T-cell (primary cell): ENCODE measurements at regions of chr6 and their contacts with region 1.

Region 1: DNA sequence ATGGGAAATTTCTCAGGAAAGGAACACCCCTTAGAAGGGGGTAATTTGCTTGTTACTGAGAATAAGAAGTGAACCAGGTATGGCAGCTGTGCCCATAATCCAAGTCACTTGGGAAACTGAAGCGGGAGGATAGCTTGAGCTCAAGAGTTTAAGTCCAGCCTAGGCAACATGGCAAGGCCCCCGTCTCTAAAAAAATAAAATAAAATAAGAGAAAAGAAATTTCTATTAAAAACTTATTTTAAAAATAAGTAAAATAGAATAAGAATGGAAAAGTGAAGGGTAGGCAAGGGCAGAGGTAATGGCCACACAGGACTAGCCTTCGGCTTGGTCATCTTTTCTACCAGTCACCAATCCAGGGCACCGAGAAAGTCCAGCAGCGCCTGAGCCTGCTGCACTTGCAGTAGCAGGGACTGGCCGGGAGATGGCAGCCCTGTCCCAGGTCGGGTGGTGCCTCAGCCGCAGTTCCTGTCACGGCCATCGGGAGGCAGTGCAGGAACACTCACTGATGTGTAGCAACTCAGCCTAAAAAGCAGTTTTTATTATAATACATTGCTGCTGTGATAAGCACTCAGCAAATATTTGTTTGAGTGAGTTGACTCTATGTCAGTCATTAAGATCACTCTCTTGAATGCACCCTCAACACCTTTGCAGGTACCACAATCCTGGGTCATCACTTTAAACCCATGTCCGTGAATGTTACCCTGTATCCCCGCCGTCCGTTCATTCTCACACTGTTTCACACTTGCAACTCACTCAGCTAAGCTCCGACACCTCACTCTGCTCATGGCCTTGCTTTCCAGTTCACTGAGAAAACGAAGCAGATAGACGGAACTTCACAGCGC is 23.2 kb upstream of the GCM1 start:
- DNase-seq: peak; percentile 69 to 94 (median 88)
- ATAC-seq: peak; percentile 88 to 99 (median 96)
- H3K4me3 ChIP-seq: no peak overlapping the region
- H3K4me3 Mint-ChIP-seq: no peak overlapping the region
- H3K27ac ChIP-seq: no peak overlapping the region
- H3K27ac Mint-ChIP-seq: no peak overlapping the region
- H3K4me1 ChIP-seq: no peaks in the 10 kb centered on the region
- H3K4me1 Mint-ChIP-seq: peaks cover 0 to 9% (median 0%) of the 10 kb centered on the region in 3 donors
- H3K27me3 ChIP-seq: no peaks in the 10 kb centered on the region
- H3K27me3 Mint-ChIP-seq: no peaks in the 10 kb centered on the region

Region 2: DNA sequence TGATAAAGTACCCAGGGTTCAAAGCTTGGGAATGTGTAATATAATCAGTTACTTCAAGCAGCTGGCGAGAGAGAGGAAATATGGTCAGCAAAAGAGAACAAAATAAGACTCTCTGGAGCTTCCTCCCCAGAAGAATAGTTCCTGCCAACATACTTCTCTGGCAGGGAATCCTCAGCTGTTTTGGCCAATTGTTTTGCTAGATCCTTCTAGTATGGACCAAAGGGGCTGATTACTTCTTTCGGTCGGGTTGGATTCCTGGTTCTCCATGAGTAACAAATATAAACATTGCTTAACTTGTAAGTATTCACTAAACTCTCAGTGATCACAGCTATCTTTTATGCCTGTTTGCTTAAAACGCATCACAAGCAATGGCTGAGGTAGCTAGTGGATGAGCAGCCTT is 138.1 kb before region 1 on chr6:
- CTCF ChIA-PET with region 1: no interaction called
- POLR2A ChIA-PET with region 1: no interaction called
- DNase-seq: no peak
- ATAC-seq: no peak
- H3K4me3 ChIP-seq: no peak overlapping the region
- H3K4me3 Mint-ChIP-seq: no peak overlapping the region
- H3K27ac ChIP-seq: no peak overlapping the region
- H3K27ac Mint-ChIP-seq: no peak overlapping the region
- H3K4me1 ChIP-seq: no peaks in the 10 kb centered on the region
- H3K4me1 Mint-ChIP-seq: peaks cover 0 to 1% (median 0%) of the 10 kb centered on the region in 3 donors
- H3K27me3 ChIP-seq: no peaks in the 10 kb centered on the region
- H3K27me3 Mint-ChIP-seq: no peaks in the 10 kb centered on the region

Region 3: GRCh38 chr6:53342217-53342616 is 170.4 kb after region 1 on chr6:
- CTCF ChIA-PET with region 1: interaction called in 1 of 2 experiments, 8 read pairs
- POLR2A ChIA-PET with region 1: interaction called in 1 of 2 experiments, 12 read pairs
- DNase-seq: no peak
- ATAC-seq: no peak
- H3K4me3 ChIP-seq: no peak overlapping the region
- H3K4me3 Mint-ChIP-seq: peak overlapping the region in 2 of 3 donors; percentile 8 to 35
- H3K27ac ChIP-seq: no peak overlapping the region
- H3K27ac Mint-ChIP-seq: peak overlapping the region; percentile 78 to 82
- H3K4me1 ChIP-seq: peaks cover 28 to 53% of the 10 kb centered on the region in 2 experiments
- H3K4me1 Mint-ChIP-seq: peaks cover 93 to 96% (median 95%) of the 10 kb centered on the region in 3 donors
- H3K27me3 ChIP-seq: no peaks in the 10 kb centered on the region
- H3K27me3 Mint-ChIP-seq: no peaks in the 10 kb centered on the region

Region 4: DNA sequence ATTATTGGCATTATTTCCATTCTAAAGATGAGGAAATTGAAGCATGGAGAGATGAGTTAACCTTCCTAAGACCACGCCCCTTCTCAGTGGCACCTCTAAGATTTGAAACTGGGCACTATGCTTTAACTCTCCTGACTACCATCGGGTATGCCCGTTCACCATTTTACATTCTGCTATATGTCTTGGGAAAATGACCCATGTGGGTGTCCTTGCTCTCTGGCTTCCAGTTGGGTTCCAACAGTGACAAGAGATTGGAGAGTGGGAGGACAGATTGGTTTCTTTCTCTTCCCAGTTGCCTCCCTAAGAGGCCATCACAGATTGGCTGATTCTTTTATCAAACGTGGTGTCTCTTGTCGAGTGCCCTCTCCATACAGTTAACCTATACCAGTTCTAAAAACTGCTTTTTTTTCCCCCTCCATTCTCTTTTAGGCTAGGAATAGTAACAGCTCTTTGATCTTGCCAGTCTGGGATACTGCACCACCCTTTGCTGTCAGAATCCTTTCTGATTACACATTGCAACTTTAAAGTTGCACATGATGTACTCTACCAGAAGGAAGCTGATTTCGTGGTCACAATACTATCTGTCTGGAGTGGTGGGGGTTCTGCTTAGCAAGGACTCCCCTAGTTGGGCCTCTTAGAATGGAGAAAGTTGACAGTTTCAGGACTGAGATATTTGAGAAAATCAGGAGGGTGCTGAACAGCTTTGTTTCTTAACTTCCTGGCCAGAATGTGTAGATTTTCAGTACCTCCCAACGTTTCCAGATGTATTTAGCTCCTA is 264.9 kb after region 1 on chr6:
- CTCF ChIA-PET with region 1: interaction called, 6 to 10 read pairs
- POLR2A ChIA-PET with region 1: no interaction called
- DNase-seq: no peak
- ATAC-seq: no peak
- H3K4me3 ChIP-seq: no peak overlapping the region
- H3K4me3 Mint-ChIP-seq: no peak overlapping the region
- H3K27ac ChIP-seq: no peak overlapping the region
- H3K27ac Mint-ChIP-seq: no peak overlapping the region
- H3K4me1 ChIP-seq: no peaks in the 10 kb centered on the region
- H3K4me1 Mint-ChIP-seq: peaks cover 2 to 7% (median 5%) of the 10 kb centered on the region in 3 donors
- H3K27me3 ChIP-seq: no peaks in the 10 kb centered on the region
- H3K27me3 Mint-ChIP-seq: no peaks in the 10 kb centered on the region

Region 5: DNA sequence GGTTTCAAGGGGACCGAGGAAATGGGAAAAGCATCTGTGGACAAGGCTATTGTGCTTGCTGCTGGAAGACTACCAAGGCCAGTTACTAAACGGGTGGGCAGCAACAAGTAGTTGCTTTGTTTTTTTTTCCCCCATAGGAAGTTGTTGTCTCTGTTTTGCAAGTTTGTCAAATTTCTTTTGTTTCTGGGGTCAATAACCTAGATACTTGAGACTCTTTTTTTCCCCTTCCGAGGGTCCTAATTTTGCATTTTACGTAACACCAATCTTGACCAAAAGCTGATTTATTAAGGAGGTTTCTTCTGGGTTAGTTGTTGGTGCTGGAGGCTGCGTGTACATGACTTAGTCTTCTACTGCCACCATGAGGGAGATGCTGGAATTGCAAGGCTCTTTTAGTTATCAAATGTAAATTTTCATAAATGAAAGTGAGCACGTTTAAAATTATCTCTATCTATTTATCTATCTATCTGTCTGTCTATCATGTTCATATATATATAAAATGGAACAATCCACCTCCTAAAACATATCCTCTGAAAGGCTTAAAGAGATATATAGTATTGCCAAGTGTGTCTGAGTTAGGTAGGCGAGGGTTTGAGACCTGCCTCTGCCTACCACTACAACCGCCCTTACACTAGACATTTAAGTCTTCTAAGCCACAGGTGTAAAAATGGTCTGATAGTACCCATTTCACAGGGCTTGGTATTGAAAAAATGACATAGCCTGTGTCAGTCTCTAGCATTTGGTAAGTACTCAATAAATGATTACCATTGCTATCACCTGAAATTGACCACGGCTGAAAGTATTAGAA is 312.9 kb after region 1 on chr6:
- CTCF ChIA-PET with region 1: interaction called, 33 to 46 read pairs
- POLR2A ChIA-PET with region 1: no interaction called
- DNase-seq: peak in 33 of 35 experiments; percentile 19 to 85 (median 61)
- ATAC-seq: peak in 2 of 4 experiments; percentile 47 to 63
- H3K4me3 ChIP-seq: no peak overlapping the region
- H3K4me3 Mint-ChIP-seq: no peak overlapping the region
- H3K27ac ChIP-seq: no peak overlapping the region
- H3K27ac Mint-ChIP-seq: no peak overlapping the region
- H3K4me1 ChIP-seq: no peaks in the 10 kb centered on the region
- H3K4me1 Mint-ChIP-seq: peaks cover 0 to 20% (median 7%) of the 10 kb centered on the region in 3 donors
- H3K27me3 ChIP-seq: peaks cover 0 to 4% of the 10 kb centered on the region in 2 experiments
- H3K27me3 Mint-ChIP-seq: peaks cover 21 to 46% of the 10 kb centered on the region in 2 donors